ENCODE measurements at regions of chr6 and their contacts with region 1.

Region 1: GRCh38 chr6:158255275-158255988 is 56.8 kb upstream of the TULP4 start:
- DNase-seq: no peak
- H3K4me3 ChIP-seq: no peak overlapping the region
- H3K27ac ChIP-seq: no peak overlapping the region
- H3K4me1 ChIP-seq: peaks cover 0 to 13% (median 5%) of the 10 kb centered on the region in 4 donors
- H3K27me3 ChIP-seq: no peaks in the 10 kb centered on the region
- CTCF ChIP-seq: no peak
- EP300 ChIP-seq: no peak
- POLR2A ChIP-seq: no peak

Region 2: DNA sequence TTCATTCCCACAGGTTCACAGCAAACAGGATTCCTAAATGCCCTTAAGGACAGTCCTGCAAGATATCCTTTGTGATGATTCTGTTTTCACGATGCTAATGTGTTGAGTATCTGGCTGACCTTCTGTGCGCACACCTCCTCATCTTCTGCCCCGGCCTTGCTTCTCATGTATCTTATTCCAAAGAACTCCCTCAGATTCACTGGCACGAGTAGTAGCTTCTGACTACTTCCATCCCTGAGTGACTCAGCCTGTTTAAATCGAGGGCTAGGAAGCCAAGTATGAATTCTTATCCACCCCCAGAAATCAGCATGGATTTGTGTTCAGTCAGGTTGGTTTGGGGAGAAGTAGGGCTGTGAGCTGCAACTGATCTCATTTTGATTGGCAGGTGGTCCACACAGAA is 622.6 kb before region 1 on chr6:
- intact Hi-C with region 1: loop called (anchors 10 kb)
- DNase-seq: peak; percentile 15
- H3K4me3 ChIP-seq: no peak overlapping the region
- H3K27ac ChIP-seq: no peak overlapping the region
- H3K4me1 ChIP-seq: peaks cover 0 to 18% (median 13%) of the 10 kb centered on the region in 4 donors
- H3K27me3 ChIP-seq: no peaks in the 10 kb centered on the region
- CTCF ChIP-seq: no peak
- EP300 ChIP-seq: no peak
- POLR2A ChIP-seq: no peak

Region 3: GRCh38 chr6:158284007-158284875 is 28.8 kb after region 1 on chr6:
- intact Hi-C with region 1: no loop called
- DNase-seq: no peak
- H3K4me3 ChIP-seq: peak overlapping the region in 1 of 4 donors; percentile 2
- H3K27ac ChIP-seq: peak overlapping the region; percentile 29 to 77 (median 62)
- H3K4me1 ChIP-seq: peaks cover 0 to 52% (median 34%) of the 10 kb centered on the region in 4 donors
- H3K27me3 ChIP-seq: no peaks in the 10 kb centered on the region
- CTCF ChIP-seq: no peak
- EP300 ChIP-seq: no peak
- POLR2A ChIP-seq: no peak

Region 4: DNA sequence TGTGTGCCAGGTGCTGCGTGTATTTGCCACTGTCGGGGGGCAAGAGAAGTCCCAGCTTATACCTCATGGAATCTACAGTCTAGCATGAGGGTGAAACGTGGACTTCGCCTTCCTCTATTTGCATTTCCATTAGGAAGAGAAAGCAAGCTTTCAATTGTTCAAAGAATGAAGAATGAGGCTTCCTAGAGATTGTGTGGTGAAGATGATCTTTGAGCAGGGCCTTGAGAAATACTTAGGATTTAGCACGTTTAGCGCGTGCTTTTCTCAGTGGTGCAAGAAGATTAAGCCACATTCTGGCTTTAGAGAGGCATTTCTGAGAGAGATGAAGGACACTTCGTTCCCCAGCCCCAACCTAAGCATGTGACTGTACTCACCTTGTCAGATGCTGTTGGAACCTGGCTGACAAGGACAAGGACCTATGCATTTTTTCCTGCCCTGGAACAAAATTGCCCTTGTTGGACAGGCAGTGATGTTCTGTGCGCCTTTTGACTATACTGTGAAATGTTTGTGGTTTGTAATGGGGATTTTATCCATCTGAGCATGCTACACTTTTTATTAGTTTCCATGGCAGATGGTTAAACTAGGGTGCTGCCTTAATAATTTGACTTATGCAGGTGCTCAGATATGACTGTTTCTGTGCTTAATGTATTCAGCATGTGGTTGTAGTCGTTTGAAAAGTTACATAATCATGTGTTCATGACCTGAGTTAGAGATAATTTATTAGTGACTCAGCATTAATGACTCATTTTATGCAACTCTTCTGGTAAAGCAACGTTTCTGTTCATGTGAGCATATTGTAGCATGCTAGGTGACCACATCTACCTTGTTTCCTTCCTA is 67.5 kb after region 1 on chr6:
- intact Hi-C with region 1: no loop called
- DNase-seq: no peak
- H3K4me3 ChIP-seq: no peak overlapping the region
- H3K27ac ChIP-seq: no peak overlapping the region
- H3K4me1 ChIP-seq: peaks cover 0 to 31% (median 13%) of the 10 kb centered on the region in 4 donors
- H3K27me3 ChIP-seq: no peaks in the 10 kb centered on the region
- CTCF ChIP-seq: no peak
- EP300 ChIP-seq: no peak
- POLR2A ChIP-seq: no peak

Region 5: DNA sequence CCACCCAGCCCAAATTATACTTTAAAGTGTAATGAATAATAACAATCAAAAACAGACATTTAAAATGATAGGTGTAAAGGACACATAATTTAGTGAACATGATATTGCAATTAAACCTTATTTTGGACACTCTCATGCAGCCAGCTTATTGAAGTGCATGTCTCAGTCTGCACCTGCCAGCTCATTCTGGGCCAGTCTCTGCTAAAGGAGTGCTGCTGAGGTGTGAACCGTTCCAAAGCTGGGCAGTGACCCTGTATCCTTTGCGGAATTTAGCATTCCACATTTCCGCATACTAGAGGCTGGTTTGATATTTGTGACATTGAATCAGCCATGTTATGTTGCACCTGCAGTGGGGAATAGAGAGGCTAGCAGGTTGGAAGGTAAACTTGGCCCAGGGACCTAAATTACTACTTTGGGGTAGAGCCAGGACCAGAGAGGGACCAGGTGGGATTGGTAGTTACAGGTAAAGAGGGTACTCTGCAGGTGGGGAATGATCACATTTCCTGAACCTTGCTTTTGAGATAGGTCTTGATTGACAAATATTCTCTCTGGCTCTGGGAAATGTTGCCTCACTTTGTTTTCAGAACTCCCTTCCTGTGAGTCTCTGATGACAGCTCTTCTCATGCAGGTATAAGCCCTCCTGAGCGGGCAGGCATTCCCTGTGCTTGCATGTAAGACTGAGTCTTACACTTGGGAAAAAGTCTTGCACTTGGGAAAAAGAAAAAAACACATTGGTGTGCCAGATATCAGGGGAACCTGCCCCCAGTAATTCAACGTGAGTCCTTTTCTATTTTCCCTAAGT is 83.1 kb after region 1 on chr6:
- intact Hi-C with region 1: no loop called
- DNase-seq: no peak
- H3K4me3 ChIP-seq: no peak overlapping the region
- H3K27ac ChIP-seq: no peak overlapping the region
- H3K4me1 ChIP-seq: peaks cover 0 to 5% (median 0%) of the 10 kb centered on the region in 4 donors
- H3K27me3 ChIP-seq: no peaks in the 10 kb centered on the region
- CTCF ChIP-seq: no peak
- EP300 ChIP-seq: no peak
- POLR2A ChIP-seq: no peak

Region 6: GRCh38 chr6:159399751-159400221 is 1144.4 kb after region 1 on chr6:
- intact Hi-C with region 1: no loop called
- DNase-seq: no peak
- H3K4me3 ChIP-seq: no peak overlapping the region
- H3K27ac ChIP-seq: no peak overlapping the region
- H3K4me1 ChIP-seq: no peaks in the 10 kb centered on the region
- H3K27me3 ChIP-seq: no peaks in the 10 kb centered on the region
- CTCF ChIP-seq: no peak
- EP300 ChIP-seq: no peak
- POLR2A ChIP-seq: no peak

Measured in sigmoid colon (tissue), 7 donors.